OCI-LY7 (cell line): ENCODE measurements at regions of chr11 and their contacts with region 1.

Region 1: DNA sequence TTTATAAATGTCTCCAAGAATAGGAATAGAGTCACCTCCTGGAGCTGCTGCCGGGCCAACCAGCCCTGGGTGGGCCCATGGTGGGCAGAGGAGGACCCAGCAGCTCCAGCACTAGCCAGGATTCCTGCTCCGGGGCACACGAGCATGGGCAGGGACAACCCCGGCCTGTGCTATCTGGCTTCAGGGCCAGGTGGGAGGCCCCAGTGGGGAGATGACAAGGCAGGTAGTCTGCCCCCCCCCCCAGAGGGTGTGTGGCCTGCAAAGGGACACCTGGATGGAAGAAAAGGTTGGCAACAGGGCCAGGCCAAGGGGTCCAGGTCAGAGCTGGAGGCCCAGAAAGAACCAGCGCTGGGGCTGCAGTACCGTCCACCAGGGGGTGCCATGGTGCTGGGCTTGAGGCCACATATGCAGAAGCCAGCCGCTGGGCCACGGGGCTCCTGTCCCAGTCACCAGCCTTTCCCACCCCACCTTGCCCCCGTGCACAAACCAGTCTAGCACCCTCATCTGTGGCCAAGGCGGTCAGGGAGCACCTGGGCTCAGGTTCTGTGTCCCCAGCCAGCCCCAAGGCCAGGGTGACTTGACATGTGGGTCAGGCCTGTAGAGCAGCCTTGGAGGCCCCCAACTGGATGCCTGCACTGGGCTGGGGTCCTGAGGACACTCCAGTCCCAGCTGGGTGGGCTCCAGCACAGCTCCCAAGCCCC is 3.5 kb downstream of the TSPAN32 start:
- DNase-seq: peak; percentile 84
- H3K4me3 ChIP-seq: no peak overlapping the region
- H3K27ac ChIP-seq: no peak overlapping the region
- H3K4me1 ChIP-seq: peaks cover 8% of the 10 kb centered on the region
- CTCF ChIP-seq: peak; percentile 93

Region 2: DNA sequence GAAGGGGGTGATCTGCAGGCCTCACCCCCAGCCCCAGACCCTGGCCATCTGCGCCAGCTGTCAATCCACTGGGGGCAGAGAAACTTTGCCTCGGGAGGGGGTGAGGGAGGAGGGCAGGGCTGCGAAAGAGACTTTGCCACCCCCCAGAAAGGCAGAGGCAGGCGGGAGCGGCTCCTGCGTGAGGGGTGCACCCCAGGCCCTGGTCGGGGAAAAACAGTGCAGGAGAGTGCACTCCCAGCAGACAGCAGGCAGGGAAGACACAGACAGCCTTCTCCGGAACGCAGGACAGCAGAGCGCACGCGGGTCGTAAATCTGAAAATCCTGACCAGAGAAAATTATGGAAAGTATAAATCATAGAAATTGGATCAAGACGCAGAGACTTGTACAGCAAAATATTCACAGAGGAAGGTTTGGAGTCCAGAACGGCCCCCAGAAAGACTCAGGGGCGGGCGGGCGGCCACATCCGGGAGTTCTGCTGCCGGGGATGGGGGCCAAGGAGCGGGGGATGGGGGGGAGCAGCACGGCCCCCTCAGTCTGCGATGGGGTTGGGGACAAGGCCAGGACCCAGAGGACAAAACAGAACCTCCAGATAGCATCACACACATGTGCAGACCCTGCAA is 366.2 kb before region 1 on chr11:
- CTCF ChIA-PET with region 1: no interaction called
- POLR2A ChIA-PET with region 1: no interaction called
- intact Hi-C with region 1: no loop called
- DNase-seq: no peak
- H3K4me3 ChIP-seq: no peak overlapping the region
- H3K27ac ChIP-seq: no peak overlapping the region
- H3K4me1 ChIP-seq: no peaks in the 10 kb centered on the region
- CTCF ChIP-seq: no peak

Region 3: DNA sequence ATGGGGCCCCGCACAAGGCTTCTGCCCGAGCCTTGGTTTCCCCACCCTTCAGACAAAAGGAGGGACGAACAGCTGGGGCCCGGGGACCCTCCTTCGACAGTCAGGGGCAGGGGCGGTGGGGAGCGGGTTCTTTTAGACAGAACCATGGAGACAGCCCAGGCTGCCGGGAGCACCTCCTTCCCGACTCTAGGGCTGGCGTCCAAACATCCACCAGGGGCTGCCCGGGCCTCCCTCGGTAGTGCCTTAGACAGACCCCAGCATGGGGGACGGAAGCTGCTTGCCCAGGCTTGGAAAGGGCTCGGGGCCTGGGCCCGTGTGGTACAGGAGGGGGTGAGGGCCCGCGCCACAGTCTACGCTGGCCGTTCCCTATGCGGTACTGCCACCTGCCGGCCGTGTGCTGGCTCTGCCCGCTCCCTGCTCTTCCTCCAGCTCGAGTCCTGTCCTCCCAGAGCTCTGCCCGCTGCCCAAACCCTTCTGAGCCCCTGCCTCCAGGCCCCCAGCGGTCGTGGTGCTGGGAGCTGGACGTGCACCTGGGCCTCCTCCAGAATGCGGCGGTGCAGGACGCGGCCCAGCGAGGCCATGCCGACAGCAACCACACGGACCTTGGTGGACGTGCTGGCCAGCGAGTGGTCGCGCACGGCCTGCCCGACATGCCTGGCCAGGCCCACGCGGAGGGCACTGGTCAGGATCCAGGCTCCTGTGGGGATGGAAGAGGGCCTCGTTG is 115.4 kb after region 1 on chr11:
- CTCF ChIA-PET with region 1: interaction called, 44 read pairs
- POLR2A ChIA-PET with region 1: interaction called, 3 read pairs
- intact Hi-C with region 1: loop called (anchors 1 kb)
- DNase-seq: peak; percentile 77
- H3K4me3 ChIP-seq: no peak overlapping the region
- H3K27ac ChIP-seq: no peak overlapping the region
- H3K4me1 ChIP-seq: no peaks in the 10 kb centered on the region
- CTCF ChIP-seq: peak; percentile 83